ENCODE measurements at regions of chrX and their contacts with region 1.

Region 1: DNA sequence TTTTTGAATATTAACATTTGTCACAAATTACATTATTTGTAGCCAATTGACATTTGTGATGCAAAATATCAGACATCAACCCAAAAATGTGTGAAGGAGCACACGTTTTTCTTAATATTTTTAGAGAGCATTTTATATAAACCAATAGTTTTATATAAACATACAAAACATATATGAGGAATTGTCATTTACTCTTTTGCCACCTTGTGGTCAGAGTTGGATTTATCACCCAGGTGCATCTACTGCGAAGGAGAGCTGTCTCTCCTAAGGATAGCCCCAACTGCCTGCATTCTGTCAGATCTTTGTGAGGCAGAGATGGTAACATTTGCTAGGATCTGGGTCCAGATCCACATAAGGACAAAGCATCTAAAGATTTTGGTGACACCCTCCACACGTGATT is 2.5 kb upstream of the USP27X start:
- DNase-seq: peak; percentile 49
- H3K4me3 ChIP-seq: no peak overlapping the region
- H3K27ac ChIP-seq: no peak overlapping the region
- H3K4me1 ChIP-seq: no peaks in the 10 kb centered on the region
- H3K27me3 ChIP-seq: no peaks in the 10 kb centered on the region
- CTCF ChIP-seq: peak; percentile 63

Region 2: DNA sequence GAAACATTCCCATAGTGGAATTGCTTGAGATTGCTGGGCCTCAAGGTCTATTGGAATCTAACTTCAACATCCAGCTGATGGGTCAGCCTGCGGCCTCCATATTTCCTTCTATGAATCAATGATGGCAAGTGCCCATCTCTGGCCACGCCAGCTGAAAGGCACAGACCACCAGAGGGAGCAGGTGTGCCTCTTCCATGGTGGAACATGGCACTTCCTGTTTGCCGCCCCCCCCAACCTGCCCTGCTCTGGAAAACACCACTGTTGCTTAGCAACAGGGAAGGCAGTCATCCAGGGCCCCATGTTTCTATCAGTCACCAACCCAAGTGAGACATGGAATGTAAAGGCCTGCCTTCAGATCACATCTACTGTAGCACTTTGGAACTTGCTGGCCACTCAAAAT is 36.1 kb before region 1 on chrX:
- CTCF ChIA-PET with region 1: interaction called, 4 read pairs
- POLR2A ChIA-PET with region 1: no interaction called
- intact Hi-C with region 1: loop called (anchors 1 kb)
- DNase-seq: peak; percentile 71
- H3K4me3 ChIP-seq: no peak overlapping the region
- H3K27ac ChIP-seq: no peak overlapping the region
- H3K4me1 ChIP-seq: no peaks in the 10 kb centered on the region
- H3K27me3 ChIP-seq: no peaks in the 10 kb centered on the region
- CTCF ChIP-seq: peak; percentile 63

Region 3: GRCh38 chrX:51851507-51852085 is 1974.8 kb after region 1 on chrX:
- CTCF ChIA-PET with region 1: no interaction called
- POLR2A ChIA-PET with region 1: no interaction called
- intact Hi-C with region 1: no loop called
- DNase-seq: no peak
- H3K4me3 ChIP-seq: no peak overlapping the region
- H3K27ac ChIP-seq: no peak overlapping the region
- H3K4me1 ChIP-seq: peaks cover 10% of the 10 kb centered on the region
- H3K27me3 ChIP-seq: no peaks in the 10 kb centered on the region
- CTCF ChIP-seq: no peak